CD4-positive, alpha-beta memory T cell (primary cell): ENCODE measurements at regions of chr5 and their contacts with region 1.

Region 1: DNA sequence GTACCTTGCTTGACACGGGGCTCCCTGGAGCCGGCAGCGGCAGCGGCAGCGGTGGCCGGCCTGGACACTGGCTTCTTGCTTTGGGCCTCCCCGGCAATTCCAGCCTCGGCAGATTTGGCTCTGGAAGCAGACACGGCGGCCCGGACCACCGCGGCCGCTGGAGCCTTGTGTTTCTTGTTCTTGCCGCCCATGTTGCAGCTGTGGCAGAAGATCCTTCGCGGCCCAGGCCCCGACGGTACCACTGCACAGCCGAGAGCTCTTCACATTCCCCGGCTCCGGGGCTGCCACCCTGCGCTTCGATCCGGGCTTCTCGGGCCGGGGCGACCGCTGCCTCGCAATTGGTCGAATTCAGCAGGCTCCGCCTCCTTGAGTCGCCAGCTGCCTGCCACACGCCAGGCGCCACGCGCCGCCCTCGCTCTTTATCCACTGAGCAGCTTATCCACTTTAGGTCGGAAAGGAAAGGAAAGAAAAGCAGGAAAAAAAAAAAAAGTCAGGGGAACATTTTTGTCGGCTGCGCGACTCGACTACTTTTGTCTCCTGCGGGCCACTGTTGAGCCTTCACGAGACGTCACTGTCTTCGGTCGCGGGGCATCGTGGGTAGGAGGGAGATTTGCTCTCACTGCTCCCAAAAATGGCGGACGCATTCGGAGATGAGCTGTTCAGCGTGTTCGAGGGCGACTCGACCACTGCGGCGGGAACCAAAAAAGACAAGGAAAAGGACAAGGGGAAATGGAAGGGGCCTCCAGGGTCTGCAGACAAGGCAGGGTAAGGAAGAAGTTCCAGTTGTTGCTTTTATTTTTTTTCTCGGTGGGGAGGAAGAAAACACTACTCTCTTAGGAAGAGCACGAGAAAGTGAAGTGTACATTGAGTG is at the starts of genes DHX29 and MTREX:
- DNase-seq: peak; percentile 89 to 93 (median 91)
- H3K4me3 ChIP-seq: peak within 1 kb of the TSS; percentile 86 to 94
- H3K4me3 Mint-ChIP-seq: no peak within 1 kb of the TSS
- H3K27ac ChIP-seq: peak within 1 kb of the TSS; percentile 94
- H3K27ac Mint-ChIP-seq: no peak within 1 kb of the TSS
- H3K4me1 ChIP-seq: peaks cover 66% of the 10 kb centered on the region
- H3K4me1 Mint-ChIP-seq: peaks cover 21 to 35% (median 25%) of the 10 kb centered on the region in 4 donors
- H3K27me3 ChIP-seq: no peaks in the 10 kb centered on the region
- H3K27me3 Mint-ChIP-seq: no peaks in the 10 kb centered on the region
- total RNA-seq, gene DHX29: 18.5 to 22.5 TPM
- total RNA-seq, gene MTREX: 73.3 to 82.2 TPM

Region 2: DNA sequence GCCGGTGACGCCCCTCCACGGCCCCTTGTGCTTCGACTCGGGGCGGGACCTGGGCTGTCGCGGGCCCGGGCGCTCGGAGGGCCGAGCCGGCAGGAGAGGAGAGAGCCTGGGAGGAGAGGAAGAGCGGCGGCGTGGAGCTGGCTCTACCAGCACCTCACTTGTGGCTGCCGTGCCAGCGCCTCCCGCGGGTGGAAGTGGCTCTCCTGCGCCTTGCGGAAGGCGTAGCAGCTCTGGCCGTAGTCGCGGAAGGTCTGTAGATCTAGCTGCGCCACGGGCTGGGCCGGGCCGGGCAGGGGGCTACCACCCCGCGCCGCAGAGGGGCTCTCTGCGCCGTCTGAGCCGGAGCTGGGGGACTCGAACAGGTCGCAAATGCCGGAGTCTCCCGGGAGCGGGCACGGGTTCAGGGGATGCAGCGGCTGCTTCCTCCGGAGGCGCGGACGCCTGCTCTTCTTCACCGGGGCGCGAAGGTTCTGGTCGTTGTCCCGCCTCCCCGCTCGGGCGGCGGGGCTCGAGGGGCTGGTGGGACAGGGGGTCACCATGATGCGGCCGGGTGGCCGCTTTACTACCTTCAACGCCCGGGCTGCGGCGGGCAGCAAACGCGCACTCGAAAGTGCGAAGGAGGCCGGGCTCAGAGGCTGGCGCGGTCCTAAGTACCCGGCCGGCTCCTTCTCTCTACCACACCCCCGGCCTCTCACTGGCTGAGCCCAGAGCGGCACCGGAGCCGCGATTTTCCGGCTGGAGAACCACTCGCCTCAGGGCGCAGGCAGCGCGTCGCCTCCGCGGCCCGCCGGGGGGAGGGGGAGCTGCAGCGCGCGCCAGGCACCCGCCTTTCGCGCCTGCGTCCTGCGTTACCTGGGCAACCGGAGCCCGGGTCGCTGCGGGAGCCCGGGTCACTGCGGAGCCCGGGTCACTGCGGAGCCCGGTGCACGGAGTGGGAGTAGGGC is 74.4 kb before region 1 on chr5 and contains the start of gene CCNO:
- CTCF ChIA-PET with region 1: interaction called, 3 read pairs
- POLR2A ChIA-PET with region 1: interaction called, 6 read pairs
- intact Hi-C with region 1: loop called (anchors 5 kb)
- DNase-seq: peak; percentile 56 to 62 (median 59)
- H3K4me3 ChIP-seq: peak within 1 kb of the TSS; percentile 46 to 65
- H3K4me3 Mint-ChIP-seq: peak within 1 kb of the TSS; percentile 80 to 94 (median 89)
- H3K27ac ChIP-seq: no peak within 1 kb of the TSS
- H3K27ac Mint-ChIP-seq: peak within 1 kb of the TSS in 3 of 7 donors; percentile 53 to 65 (median 58)
- H3K4me1 ChIP-seq: peaks cover 33% of the 10 kb centered on the region
- H3K4me1 Mint-ChIP-seq: peaks cover 18 to 38% (median 30%) of the 10 kb centered on the region in 4 donors
- H3K27me3 ChIP-seq: peaks cover 55% of the 10 kb centered on the region
- H3K27me3 Mint-ChIP-seq: peaks cover 50 to 61% of the 10 kb centered on the region in 2 donors
- total RNA-seq, gene CCNO: not detected

Region 3: GRCh38 chr5:55324815-55325418 is 17.3 kb after region 1 on chr5:
- CTCF ChIA-PET with region 1: interaction called, 3 read pairs
- POLR2A ChIA-PET with region 1: interaction called, 9 read pairs
- intact Hi-C with region 1: loop called (anchors 2 kb)
- DNase-seq: peak in 4 of 5 donors; percentile 23 to 46 (median 36)
- H3K4me3 ChIP-seq: no peak overlapping the region
- H3K4me3 Mint-ChIP-seq: no peak overlapping the region
- H3K27ac ChIP-seq: no peak overlapping the region
- H3K27ac Mint-ChIP-seq: no peak overlapping the region
- H3K4me1 ChIP-seq: peaks cover 14% of the 10 kb centered on the region
- H3K4me1 Mint-ChIP-seq: peaks cover 19 to 36% (median 23%) of the 10 kb centered on the region in 4 donors
- H3K27me3 ChIP-seq: no peaks in the 10 kb centered on the region
- H3K27me3 Mint-ChIP-seq: no peaks in the 10 kb centered on the region

Region 4: DNA sequence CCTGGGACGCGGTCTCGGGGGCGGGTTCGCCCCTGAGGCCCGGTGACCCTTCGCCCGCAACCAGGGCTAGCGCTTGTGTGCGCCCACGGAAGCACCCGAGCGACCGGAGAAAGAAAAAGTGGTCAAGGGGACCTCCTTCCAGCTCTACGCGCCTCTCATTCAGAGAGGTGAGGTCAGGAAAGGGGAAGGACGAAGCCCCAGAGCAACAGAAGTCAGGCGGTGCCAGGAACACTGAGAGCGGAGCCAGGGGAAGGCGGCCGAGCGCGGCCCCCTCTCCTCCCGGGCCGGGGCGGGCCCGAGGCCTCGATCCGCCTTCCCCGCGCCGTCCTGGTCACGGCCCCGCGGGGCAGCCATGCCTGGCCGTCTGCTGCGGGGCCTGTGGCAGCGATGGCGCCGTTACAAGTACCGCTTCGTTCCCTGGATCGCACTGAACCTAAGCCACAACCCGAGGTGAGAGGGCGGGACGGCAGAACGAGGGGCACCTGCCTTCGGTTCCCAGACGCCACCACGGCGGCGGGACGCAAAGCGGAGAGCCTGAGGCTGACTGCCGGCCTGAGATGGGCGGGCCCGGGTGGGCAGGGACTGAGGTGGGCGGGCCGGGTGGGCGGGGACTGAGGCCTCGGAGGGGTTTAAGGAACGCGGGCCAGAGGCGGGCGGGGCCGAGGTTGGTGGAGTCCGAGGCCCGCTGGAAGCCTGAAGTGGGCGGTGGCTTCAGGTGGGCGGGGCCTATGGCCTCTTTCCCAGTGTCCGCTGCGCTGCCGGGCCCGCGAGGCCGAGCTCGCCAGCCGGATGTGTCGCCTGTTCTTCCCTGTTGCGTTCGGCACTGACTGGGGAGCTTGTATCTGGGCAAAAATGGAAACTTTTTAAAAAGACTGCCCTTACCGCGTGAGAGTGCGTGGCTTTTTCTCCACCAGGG is 1601.9 kb after region 1 on chr5 and contains the start of gene SETD9:
- CTCF ChIA-PET with region 1: no interaction called
- POLR2A ChIA-PET with region 1: no interaction called
- intact Hi-C with region 1: loop called (anchors 2 kb)
- DNase-seq: peak; percentile 76 to 83 (median 81)
- H3K4me3 ChIP-seq: peak within 1 kb of the TSS; percentile 88 to 97
- H3K4me3 Mint-ChIP-seq: peak within 1 kb of the TSS; percentile 89 to 98 (median 92)
- H3K27ac ChIP-seq: peak within 1 kb of the TSS; percentile 62
- H3K27ac Mint-ChIP-seq: peak within 1 kb of the TSS; percentile 65 to 95 (median 92)
- H3K4me1 ChIP-seq: peaks cover 15% of the 10 kb centered on the region
- H3K4me1 Mint-ChIP-seq: peaks cover 15 to 25% (median 17%) of the 10 kb centered on the region in 4 donors
- H3K27me3 ChIP-seq: no peaks in the 10 kb centered on the region
- H3K27me3 Mint-ChIP-seq: no peaks in the 10 kb centered on the region
- total RNA-seq, gene SETD9: 3.8 to 6.8 TPM